ENCODE measurements at regions of chr12 and their contacts with region 1.

Region 1: DNA sequence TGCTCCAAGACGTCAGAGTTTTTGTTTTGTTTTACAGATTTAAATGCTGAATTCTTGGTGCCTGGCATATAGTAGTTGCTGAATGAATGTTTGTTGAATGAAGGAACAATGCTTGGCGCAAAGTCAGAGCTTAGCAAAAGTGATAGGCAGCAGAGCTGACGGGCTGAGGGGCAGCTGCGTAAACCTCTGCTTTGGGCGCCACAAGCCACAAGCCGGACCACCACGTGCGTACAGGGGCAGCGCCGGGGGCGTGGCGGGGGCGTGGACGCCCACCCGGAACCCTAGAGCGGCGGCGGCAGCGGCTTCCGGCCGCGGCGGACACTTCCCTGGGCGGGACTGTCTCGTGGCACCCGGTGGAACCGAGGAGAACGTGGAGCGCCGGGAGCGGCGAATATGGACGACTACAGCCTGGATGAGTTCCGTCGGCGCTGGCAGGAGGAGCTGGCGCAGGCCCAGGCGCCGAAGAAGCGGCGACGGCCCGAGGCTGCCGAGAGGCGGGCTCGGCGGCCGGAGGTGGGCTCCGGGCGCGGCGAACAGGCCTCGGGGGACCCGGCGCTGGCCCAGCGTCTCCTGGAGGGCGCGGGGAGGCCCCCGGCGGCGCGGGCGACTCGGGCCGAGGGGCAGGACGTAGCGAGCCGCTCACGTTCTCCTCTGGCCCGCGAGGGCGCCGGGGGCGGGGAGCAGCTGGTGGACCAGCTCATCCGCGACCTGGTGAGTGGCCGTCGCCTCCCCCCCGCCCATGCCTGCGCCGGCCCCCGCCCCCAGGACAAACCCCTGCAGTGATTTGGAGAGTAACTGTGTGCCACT is at the start of gene FBXW8:
- DNase-seq: peak; percentile 66
- ATAC-seq: peak; percentile 96
- H3K4me3 ChIP-seq: peak within 1 kb of the TSS; percentile 69
- H3K27ac ChIP-seq: peak within 1 kb of the TSS; percentile 74
- H3K4me1 ChIP-seq: peaks cover 4% of the 10 kb centered on the region
- H3K27me3 ChIP-seq: peaks cover 6% of the 10 kb centered on the region
- CTCF ChIP-seq: no peak
- POLR2A ChIP-seq: peak; percentile 84
- RAD21 ChIP-seq: no peak
- total RNA-seq, gene FBXW8: 23.6 and 25.8 TPM in 2 replicates

Region 2: GRCh38 chr12:116194935-116195431 is 715.9 kb before region 1 on chr12:
- CTCF ChIA-PET with region 1: no interaction called
- POLR2A ChIA-PET with region 1: no interaction called
- dilution Hi-C with region 1: no loop called
- in situ Hi-C with region 1: no loop called
- intact Hi-C with region 1: no loop called
- DNase-seq: no peak
- ATAC-seq: no peak
- H3K4me3 ChIP-seq: no peak overlapping the region
- H3K27ac ChIP-seq: no peak overlapping the region
- H3K4me1 ChIP-seq: peaks cover 7% of the 10 kb centered on the region
- H3K27me3 ChIP-seq: no peaks in the 10 kb centered on the region
- CTCF ChIP-seq: no peak
- POLR2A ChIP-seq: no peak
- RAD21 ChIP-seq: no peak

Region 3: GRCh38 chr12:116737774-116738700 is 172.8 kb before region 1 on chr12 and contains the starts of genes RNFT2 and SPRING1:
- CTCF ChIA-PET with region 1: no interaction called
- POLR2A ChIA-PET with region 1: no interaction called
- dilution Hi-C with region 1: no loop called
- in situ Hi-C with region 1: no loop called
- intact Hi-C with region 1: loop called (anchors 2 kb)
- DNase-seq: peak; percentile 99
- ATAC-seq: peak; percentile 99
- H3K4me3 ChIP-seq: peak within 1 kb of the TSS; percentile 79
- H3K27ac ChIP-seq: peak within 1 kb of the TSS; percentile 60
- H3K4me1 ChIP-seq: peaks cover 2% of the 10 kb centered on the region; the same call in 1 of the 2 replicates
- H3K27me3 ChIP-seq: no peaks in the 10 kb centered on the region
- CTCF ChIP-seq: 0 out of 2 replicates have a peak, but pooled peaks have one; percentile 6
- POLR2A ChIP-seq: peak; percentile 87
- RAD21 ChIP-seq: 0 out of 2 replicates have a peak, but pooled peaks have one; percentile 3
- total RNA-seq, gene RNFT2: 1.7 and 2.3 TPM in 2 replicates
- total RNA-seq, gene SPRING1: 14.0 and 16.4 TPM in 2 replicates

Region 4: DNA sequence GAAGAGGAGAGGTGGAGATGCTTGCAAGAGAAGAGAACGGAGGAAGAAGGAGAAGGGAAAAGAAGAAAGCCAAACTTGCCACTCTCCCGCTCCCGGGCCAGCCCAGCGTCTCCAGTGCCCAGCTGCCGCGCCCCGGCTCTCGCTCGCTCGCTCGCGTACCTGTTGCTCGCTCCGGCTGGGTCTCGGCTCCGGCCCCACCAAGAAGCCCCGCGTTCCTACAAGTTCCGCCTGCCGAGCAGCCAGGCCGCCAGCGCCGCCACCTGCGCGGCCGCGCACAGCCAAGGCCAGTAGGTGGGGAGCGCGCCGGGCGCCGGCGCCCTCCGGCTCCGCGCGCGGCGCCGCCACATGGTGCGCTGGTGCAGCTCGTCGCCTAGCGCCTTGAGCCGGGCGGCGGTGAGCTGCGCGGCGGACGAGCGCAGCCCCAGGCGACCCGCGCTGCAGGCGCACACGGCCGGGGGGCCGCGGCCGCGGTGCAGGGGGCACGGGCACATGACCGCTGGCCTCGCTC is 30.0 kb before region 1 on chr12:
- CTCF ChIA-PET with region 1: no interaction called
- POLR2A ChIA-PET with region 1: no interaction called
- dilution Hi-C with region 1: no loop called
- in situ Hi-C with region 1: no loop called
- intact Hi-C with region 1: loop called (anchors 2 kb)
- DNase-seq: peak; percentile 45
- ATAC-seq: peak; percentile 74
- H3K4me3 ChIP-seq: peak overlapping the region; percentile 31; the same call in 1 of the 2 replicates
- H3K27ac ChIP-seq: no peak overlapping the region
- H3K4me1 ChIP-seq: no peaks in the 10 kb centered on the region
- H3K27me3 ChIP-seq: peaks cover 81% of the 10 kb centered on the region
- CTCF ChIP-seq: no peak
- POLR2A ChIP-seq: no peak
- RAD21 ChIP-seq: no peak

Region 5: DNA sequence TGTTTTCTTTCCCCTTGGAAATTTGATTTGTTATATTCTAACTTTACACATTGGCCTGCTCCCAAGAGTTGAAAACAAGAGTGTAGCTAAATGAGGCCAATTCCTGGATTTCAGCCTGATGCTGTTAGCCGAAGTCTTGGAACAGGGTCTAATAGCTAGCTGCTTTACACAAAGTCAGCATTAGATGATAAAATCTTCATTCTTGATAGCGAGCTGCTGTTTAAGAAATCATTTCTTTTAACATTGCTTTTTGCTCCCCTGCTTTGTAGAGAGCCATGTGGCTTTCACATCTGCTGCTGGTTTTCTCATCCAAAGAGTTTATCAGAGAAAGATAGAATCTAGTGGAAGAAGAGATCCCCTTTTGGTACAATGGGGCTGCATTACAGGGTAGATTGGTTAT is 22.2 kb after region 1 on chr12:
- CTCF ChIA-PET with region 1: no interaction called
- POLR2A ChIA-PET with region 1: no interaction called
- dilution Hi-C with region 1: no loop called
- in situ Hi-C with region 1: no loop called
- intact Hi-C with region 1: loop called (anchors 1 kb)
- DNase-seq: peak; percentile 48
- ATAC-seq: peak; percentile 42
- H3K4me3 ChIP-seq: no peak overlapping the region
- H3K27ac ChIP-seq: no peak overlapping the region
- H3K4me1 ChIP-seq: no peaks in the 10 kb centered on the region
- H3K27me3 ChIP-seq: no peaks in the 10 kb centered on the region
- CTCF ChIP-seq: no peak
- POLR2A ChIP-seq: no peak
- RAD21 ChIP-seq: no peak